Right cardiac atrium (tissue), 5 donors: ENCODE measurements at regions of chr1 and their contacts with region 1.

Region 1: DNA sequence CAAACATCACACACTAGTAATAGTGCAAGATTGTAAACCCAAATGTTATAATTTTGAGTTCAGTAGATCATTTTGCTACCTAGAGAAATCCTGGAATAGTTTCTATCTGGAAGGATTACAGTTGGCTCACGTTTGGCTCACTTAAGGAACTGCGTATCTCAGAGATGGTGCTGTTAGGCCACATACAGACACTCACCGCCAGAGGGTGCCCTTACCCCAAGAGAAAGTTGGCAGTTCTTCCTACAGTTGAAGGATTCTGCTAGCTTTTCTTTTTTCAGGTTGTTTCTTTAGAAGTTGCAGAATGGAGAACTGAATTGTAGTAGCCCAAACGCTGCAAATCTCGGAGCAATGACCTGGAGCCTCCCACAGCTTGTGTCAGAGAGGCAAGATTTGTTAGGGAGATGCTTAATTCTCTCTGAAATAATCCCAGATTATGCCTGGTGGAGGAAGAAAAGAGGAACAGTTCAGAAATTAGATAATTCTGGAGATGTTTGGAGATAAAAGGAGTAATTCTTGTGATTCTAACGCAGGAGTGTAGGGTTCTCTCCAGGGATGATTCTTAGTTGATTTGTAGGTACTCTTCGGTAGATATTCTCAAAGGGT is 87.9 kb upstream of the PAPPA2 start:
- DNase-seq: peak; percentile 60 to 89 (median 79)
- ATAC-seq: peak; percentile 80 to 82
- H3K4me3 ChIP-seq: no peak overlapping the region
- H3K27ac ChIP-seq: no peak overlapping the region
- H3K4me1 ChIP-seq: no peaks in the 10 kb centered on the region
- H3K27me3 ChIP-seq: no peaks in the 10 kb centered on the region

Region 2: GRCh38 chr1:176880954-176881595 is 506.0 kb after region 1 on chr1:
- intact Hi-C with region 1: loop called in 3 of 4 experiments (anchors 5 to 10 kb)
- DNase-seq: peak; percentile 71 to 83 (median 77)
- ATAC-seq: peak; percentile 67 to 85
- H3K4me3 ChIP-seq: no peak overlapping the region
- H3K27ac ChIP-seq: no peak overlapping the region
- H3K4me1 ChIP-seq: no peaks in the 10 kb centered on the region
- H3K27me3 ChIP-seq: no peaks in the 10 kb centered on the region